ENCODE measurements at regions of chr1 and their contacts with region 1.

Region 1: DNA sequence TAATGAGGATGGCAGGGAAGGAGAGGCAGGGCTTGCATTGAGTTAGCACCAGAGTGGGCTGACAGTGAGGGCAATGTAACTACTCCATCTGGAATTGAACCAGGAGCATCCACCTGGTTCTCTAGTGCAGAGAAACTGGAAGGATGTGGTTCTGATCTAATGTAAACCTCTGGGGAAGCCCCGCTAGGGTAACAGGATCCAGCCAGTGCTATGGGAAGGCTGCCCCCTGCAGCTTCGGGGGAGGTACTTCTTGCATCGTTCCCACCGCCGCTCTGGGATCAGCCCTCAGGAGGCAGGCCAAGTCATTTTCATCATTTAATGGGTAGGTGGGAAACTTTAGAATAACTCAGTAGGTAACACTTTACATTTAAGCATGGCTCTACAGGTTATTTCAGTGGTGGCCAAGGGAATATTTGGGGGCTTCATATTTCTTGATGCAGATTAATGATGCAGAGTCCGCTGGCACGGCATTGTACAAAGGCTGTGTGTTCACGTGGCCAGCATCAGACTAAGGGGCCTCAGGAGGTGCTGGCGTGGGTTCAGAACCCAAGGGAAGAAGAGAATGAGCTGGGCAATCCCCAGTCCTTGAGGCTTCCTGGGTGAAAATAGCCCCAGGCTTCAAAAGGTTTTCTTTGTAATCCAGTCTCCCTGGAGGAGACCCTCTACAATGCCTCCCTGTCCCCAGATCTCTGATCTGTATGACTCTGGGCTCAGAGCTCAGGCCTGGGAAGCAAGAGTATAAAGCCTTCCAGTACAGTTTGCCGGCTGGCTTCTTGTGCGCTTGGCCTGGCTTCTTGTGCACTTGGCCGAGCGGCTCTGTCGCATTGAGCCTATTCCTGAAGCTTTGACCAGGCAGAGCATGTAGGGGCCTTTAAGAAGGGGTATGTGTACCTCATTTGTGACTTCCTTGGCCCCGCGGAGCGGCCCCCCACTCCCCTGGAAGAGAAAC is 26.4 kb upstream of the KAZN start:
- DNase-seq: no peak
- ATAC-seq: no peak
- H3K4me3 ChIP-seq: no peak overlapping the region
- H3K27ac ChIP-seq: no peak overlapping the region
- H3K4me1 ChIP-seq: no peaks in the 10 kb centered on the region
- H3K27me3 ChIP-seq: peaks cover 0 to 11% (median 0%) of the 10 kb centered on the region in 9 donors
- CTCF ChIP-seq: no peak
- POLR2A ChIP-seq: no peak

Region 2: GRCh38 chr1:14476170-14476955 is 95.7 kb before region 1 on chr1:
- intact Hi-C with region 1: no loop called
- DNase-seq: no peak
- ATAC-seq: no peak
- H3K4me3 ChIP-seq: no peak overlapping the region
- H3K27ac ChIP-seq: no peak overlapping the region
- H3K4me1 ChIP-seq: no peaks in the 10 kb centered on the region
- H3K27me3 ChIP-seq: peaks cover 0 to 5% (median 0%) of the 10 kb centered on the region in 9 donors
- CTCF ChIP-seq: no peak
- POLR2A ChIP-seq: no peak

Region 3: GRCh38 chr1:14634486-14634885 is 62.4 kb after region 1 on chr1:
- intact Hi-C with region 1: loop called in 1 of 10 experiments (anchors 10 kb)
- DNase-seq: no peak
- ATAC-seq: no peak
- H3K4me3 ChIP-seq: no peak overlapping the region
- H3K27ac ChIP-seq: no peak overlapping the region
- H3K4me1 ChIP-seq: no peaks in the 10 kb centered on the region
- H3K27me3 ChIP-seq: peaks cover 0 to 10% (median 0%) of the 10 kb centered on the region in 9 donors
- CTCF ChIP-seq: no peak
- POLR2A ChIP-seq: no peak

Measured in heart left ventricle (tissue), 16 donors.